IMR-90 (cell line): ENCODE measurements at regions of chr1 and their contacts with region 1.

Region 1: DNA sequence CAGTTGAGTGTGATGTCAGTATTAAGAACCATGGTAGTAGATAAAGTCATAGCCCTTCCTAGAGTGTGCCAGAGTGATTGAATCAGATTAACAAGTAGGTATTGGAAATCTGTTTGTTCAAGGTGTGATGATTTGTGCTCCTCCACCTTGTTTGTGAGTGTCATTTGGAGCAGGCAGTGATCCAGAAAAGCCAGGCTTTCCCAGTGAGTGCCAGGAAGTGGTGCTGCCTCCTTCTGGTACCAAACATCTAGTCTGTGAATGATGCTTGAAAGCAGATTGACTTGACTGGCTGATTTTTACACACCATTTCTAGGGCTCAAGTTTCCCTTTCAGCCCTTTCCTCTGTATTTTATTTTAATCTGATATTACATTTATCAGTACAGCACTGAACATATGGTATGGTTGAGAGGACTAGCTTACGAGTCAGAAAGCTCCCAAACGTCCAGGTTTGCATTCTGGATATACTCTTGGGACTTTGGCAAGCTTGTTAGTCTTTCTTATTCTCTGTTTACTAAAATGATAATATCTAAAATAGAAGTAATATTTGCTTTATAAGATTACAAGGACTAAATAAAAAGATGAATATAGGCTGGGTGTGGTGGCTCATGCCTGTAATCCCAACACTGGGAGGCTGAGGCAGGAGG is 100.7 kb downstream of the PATJ start:
- DNase-seq: no peak
- ATAC-seq: no peak
- H3K4me3 ChIP-seq: no peak overlapping the region
- H3K27ac ChIP-seq: no peak overlapping the region
- H3K4me1 ChIP-seq: peaks cover 8% of the 10 kb centered on the region
- H3K27me3 ChIP-seq: no peaks in the 10 kb centered on the region
- CTCF ChIP-seq: 0 out of 2 replicates have a peak, but pooled peaks have one; percentile 18
- POLR2A ChIP-seq: no peak
- RAD21 ChIP-seq: no peak

Region 2: DNA sequence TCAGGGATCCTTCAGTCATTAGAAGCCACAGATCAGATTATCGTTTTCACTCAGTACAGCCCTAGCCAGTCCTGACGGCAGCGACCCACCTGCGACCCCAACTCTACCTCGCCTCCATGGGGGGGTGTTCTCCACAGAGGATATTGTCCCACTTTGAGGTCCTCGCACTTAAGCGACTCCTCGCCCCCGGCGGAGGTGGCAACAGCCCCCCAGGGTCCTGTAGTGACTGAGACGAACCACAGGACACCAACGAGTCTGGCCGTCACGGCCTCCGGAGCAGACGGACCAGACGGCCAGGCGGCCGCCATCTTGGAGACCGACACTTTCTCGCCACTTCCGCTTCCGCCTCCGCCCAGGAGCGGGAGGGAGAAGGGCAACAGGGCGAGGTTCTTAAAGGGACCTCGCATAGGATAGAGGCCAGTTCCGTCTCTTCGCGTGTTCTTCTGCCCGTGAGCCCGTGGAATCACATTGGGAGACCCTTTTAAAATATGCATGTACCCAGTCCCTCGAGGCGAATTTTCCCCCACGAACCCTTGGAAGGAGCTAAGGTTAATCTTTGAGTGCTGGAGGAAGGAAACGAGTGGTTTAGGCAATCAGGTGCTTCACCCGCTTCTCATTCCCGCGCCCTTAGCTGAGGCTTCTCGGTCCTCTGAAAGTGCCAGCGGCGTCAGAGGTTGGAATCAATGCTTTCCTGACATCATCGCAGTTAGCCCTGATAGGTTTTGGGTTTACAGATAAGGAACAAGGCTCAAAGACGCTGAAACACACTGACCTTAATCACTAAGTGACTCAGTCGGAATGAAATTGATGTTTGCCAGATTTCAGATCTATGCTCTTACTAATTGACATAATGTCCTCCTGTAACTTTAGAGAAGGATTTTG is 117.9 kb before region 1 on chr1 and contains the start of gene TM2D1:
- CTCF ChIA-PET with region 1: no interaction called
- POLR2A ChIA-PET with region 1: no interaction called
- dilution Hi-C with region 1: no loop called
- in situ Hi-C with region 1: loop called (anchors 5 kb)
- intact Hi-C with region 1: no loop called
- DNase-seq: peak; percentile 84
- ATAC-seq: peak; percentile 99
- H3K4me3 ChIP-seq: peak within 1 kb of the TSS; percentile 73
- H3K27ac ChIP-seq: peak within 1 kb of the TSS; percentile 90
- H3K4me1 ChIP-seq: peaks cover 3% of the 10 kb centered on the region; the same call in 1 of the 2 replicates
- H3K27me3 ChIP-seq: no peaks in the 10 kb centered on the region
- CTCF ChIP-seq: no peak
- POLR2A ChIP-seq: peak; percentile 99
- RAD21 ChIP-seq: no peak
- total RNA-seq, gene TM2D1: 14.3 and 21.4 TPM in 2 replicates

Region 3: GRCh38 chr1:61757945-61758344 is 85.0 kb before region 1 on chr1:
- CTCF ChIA-PET with region 1: no interaction called
- POLR2A ChIA-PET with region 1: interaction called, 10 read pairs
- dilution Hi-C with region 1: no loop called
- in situ Hi-C with region 1: no loop called
- intact Hi-C with region 1: loop called (anchors 10 kb)
- DNase-seq: peak; percentile 63
- ATAC-seq: peak; percentile 59
- H3K4me3 ChIP-seq: no peak overlapping the region
- H3K27ac ChIP-seq: no peak overlapping the region
- H3K4me1 ChIP-seq: no peaks in the 10 kb centered on the region
- H3K27me3 ChIP-seq: no peaks in the 10 kb centered on the region
- CTCF ChIP-seq: no peak
- POLR2A ChIP-seq: no peak
- RAD21 ChIP-seq: no peak

Region 4: GRCh38 chr1:61887076-61887867 is 44.3 kb after region 1 on chr1:
- CTCF ChIA-PET with region 1: no interaction called
- POLR2A ChIA-PET with region 1: no interaction called
- dilution Hi-C with region 1: no loop called
- in situ Hi-C with region 1: no loop called
- intact Hi-C with region 1: no loop called
- DNase-seq: no peak
- ATAC-seq: no peak
- H3K4me3 ChIP-seq: no peak overlapping the region
- H3K27ac ChIP-seq: no peak overlapping the region
- H3K4me1 ChIP-seq: no peaks in the 10 kb centered on the region
- H3K27me3 ChIP-seq: no peaks in the 10 kb centered on the region
- CTCF ChIP-seq: no peak
- POLR2A ChIP-seq: no peak
- RAD21 ChIP-seq: no peak